CD8-positive, alpha-beta memory T cell (primary cell): ENCODE measurements at regions of chr9 and their contacts with region 1.

Region 1: GRCh38 chr9:99184475-99185347 is 37.0 kb downstream of the ALG2 start:
- DNase-seq: peak; percentile 62 to 82 (median 66)
- H3K4me3 ChIP-seq: peak overlapping the region; percentile 30
- H3K4me3 Mint-ChIP-seq: peak overlapping the region in 4 of 7 donors; percentile 23 to 58 (median 56)
- H3K27ac ChIP-seq: no peak overlapping the region
- H3K27ac Mint-ChIP-seq: peak overlapping the region in 5 of 8 donors; percentile 73 to 82 (median 79)
- H3K4me1 ChIP-seq: peaks cover 6% of the 10 kb centered on the region
- H3K4me1 Mint-ChIP-seq: peaks cover 9 to 28% (median 16%) of the 10 kb centered on the region in 3 donors
- H3K27me3 ChIP-seq: no peaks in the 10 kb centered on the region
- H3K27me3 Mint-ChIP-seq: peaks cover 5 to 8% of the 10 kb centered on the region in 2 donors

Region 2: GRCh38 chr9:99162759-99163364 is 21.8 kb before region 1 on chr9:
- CTCF ChIA-PET with region 1: interaction called, 13 read pairs
- POLR2A ChIA-PET with region 1: no interaction called
- DNase-seq: peak in 1 of 5 donors; percentile 55
- H3K4me3 ChIP-seq: no peak overlapping the region
- H3K4me3 Mint-ChIP-seq: no peak overlapping the region
- H3K27ac ChIP-seq: no peak overlapping the region
- H3K27ac Mint-ChIP-seq: peak overlapping the region in 1 of 8 donors; percentile 47
- H3K4me1 ChIP-seq: peaks cover 5% of the 10 kb centered on the region
- H3K4me1 Mint-ChIP-seq: peaks cover 6 to 19% (median 14%) of the 10 kb centered on the region in 3 donors
- H3K27me3 ChIP-seq: no peaks in the 10 kb centered on the region
- H3K27me3 Mint-ChIP-seq: peaks cover 3% of the 10 kb centered on the region in 2 donors

Region 3: DNA sequence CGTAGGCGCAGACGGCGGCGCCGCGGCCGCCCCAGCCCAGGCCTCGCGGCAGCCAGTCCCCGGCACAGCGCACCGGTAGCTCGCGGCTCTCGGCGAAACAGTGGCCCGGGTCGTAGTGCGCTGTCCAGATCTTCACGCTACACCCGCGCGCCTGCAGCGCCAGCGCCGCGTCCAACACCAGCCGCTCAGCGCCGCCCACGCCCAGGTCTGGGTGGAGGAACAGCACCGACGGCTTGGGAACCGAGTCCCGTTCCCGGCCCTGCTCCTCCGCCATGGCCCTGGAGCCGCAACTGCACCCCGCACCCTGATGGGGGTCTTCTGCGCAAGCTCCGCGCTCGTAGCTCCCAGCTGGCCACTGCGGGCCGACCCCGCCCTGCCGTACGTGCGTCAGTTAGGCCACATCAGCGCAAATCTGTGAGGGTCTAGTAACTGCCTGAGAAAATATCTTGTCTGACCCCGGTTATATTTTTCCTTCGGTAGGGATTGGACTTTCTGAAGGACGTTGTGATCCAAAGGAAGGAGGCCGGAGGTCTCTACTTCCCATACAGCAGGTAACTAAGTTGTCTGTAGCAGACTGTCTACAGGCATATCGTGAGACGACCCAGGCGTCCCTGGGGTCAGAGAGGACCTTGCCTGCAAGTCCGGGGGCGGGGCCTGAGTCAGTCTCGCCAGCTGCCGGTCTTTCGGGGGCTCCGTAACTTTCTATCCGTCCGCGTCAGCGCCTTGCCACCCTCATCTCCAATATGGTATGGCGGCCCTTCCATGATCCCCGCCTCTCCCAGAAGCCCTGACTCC is 37.1 kb after region 1 on chr9 and contains the starts of genes ALG2 and SEC61B:
- CTCF ChIA-PET with region 1: interaction called, 13 read pairs
- POLR2A ChIA-PET with region 1: no interaction called
- DNase-seq: peak; percentile 92 to 96 (median 95)
- H3K4me3 ChIP-seq: peak within 1 kb of the TSS; percentile 74
- H3K4me3 Mint-ChIP-seq: peak within 1 kb of the TSS; percentile 94 to 100 (median 98)
- H3K27ac ChIP-seq: peak within 1 kb of the TSS; percentile 96
- H3K27ac Mint-ChIP-seq: peak within 1 kb of the TSS; percentile 98 to 100 (median 100)
- H3K4me1 ChIP-seq: peaks cover 40% of the 10 kb centered on the region
- H3K4me1 Mint-ChIP-seq: peaks cover 76 to 88% (median 83%) of the 10 kb centered on the region in 3 donors
- H3K27me3 ChIP-seq: no peaks in the 10 kb centered on the region
- H3K27me3 Mint-ChIP-seq: peaks cover 0 to 3% of the 10 kb centered on the region in 2 donors
- total RNA-seq, gene ALG2: 30.1 to 33.2 TPM
- total RNA-seq, gene SEC61B: 195 to 202 TPM

Region 4: GRCh38 chr9:99326112-99326916 is 141.6 kb after region 1 on chr9:
- CTCF ChIA-PET with region 1: no interaction called
- POLR2A ChIA-PET with region 1: no interaction called
- DNase-seq: no peak
- H3K4me3 ChIP-seq: no peak overlapping the region
- H3K4me3 Mint-ChIP-seq: no peak overlapping the region
- H3K27ac ChIP-seq: no peak overlapping the region
- H3K27ac Mint-ChIP-seq: no peak overlapping the region
- H3K4me1 ChIP-seq: no peaks in the 10 kb centered on the region
- H3K4me1 Mint-ChIP-seq: no peaks in the 10 kb centered on the region
- H3K27me3 ChIP-seq: no peaks in the 10 kb centered on the region
- H3K27me3 Mint-ChIP-seq: peaks cover 22 to 58% of the 10 kb centered on the region in 2 donors